Transverse colon (tissue), 4 donors: ENCODE measurements at regions of chr18 and their contacts with region 1.

Region 1: GRCh38 chr18:62601841-62602240 is 79.0 kb downstream of the ZCCHC2 start:
- DNase-seq: no peak
- H3K4me3 ChIP-seq: no peak overlapping the region
- H3K27ac ChIP-seq: no peak overlapping the region
- H3K4me1 ChIP-seq: peaks cover 0 to 4% (median 2%) of the 10 kb centered on the region in 4 donors
- H3K27me3 ChIP-seq: peaks cover 33% of the 10 kb centered on the region
- CTCF ChIP-seq: no peak
- EP300 ChIP-seq: no peak
- POLR2A ChIP-seq: no peak

Region 2: GRCh38 chr18:62505669-62506494 is 96.0 kb before region 1 on chr18:
- in situ Hi-C with region 1: no loop called
- intact Hi-C with region 1: no loop called
- DNase-seq: no peak
- H3K4me3 ChIP-seq: peak overlapping the region; percentile 8 to 48 (median 24)
- H3K27ac ChIP-seq: peak overlapping the region; percentile 16 to 74 (median 64)
- H3K4me1 ChIP-seq: peaks cover 4 to 18% (median 6%) of the 10 kb centered on the region in 4 donors
- H3K27me3 ChIP-seq: no peaks in the 10 kb centered on the region
- CTCF ChIP-seq: no peak
- EP300 ChIP-seq: no peak
- POLR2A ChIP-seq: no peak

Region 3: GRCh38 chr18:63969960-63970802 is 1368.3 kb after region 1 on chr18 and contains the start of gene SERPINB8:
- in situ Hi-C with region 1: no loop called
- intact Hi-C with region 1: loop called (anchors 5 kb)
- DNase-seq: peak; percentile 94
- H3K4me3 ChIP-seq: peak within 1 kb of the TSS; percentile 72 to 91 (median 75)
- H3K27ac ChIP-seq: peak within 1 kb of the TSS; percentile 97 to 100 (median 98)
- H3K4me1 ChIP-seq: peaks cover 0 to 22% (median 14%) of the 10 kb centered on the region in 4 donors
- H3K27me3 ChIP-seq: no peaks in the 10 kb centered on the region
- CTCF ChIP-seq: no peak
- EP300 ChIP-seq: no peak
- POLR2A ChIP-seq: peak; percentile 96
- total RNA-seq, gene SERPINB8: 3.0 to 15.7 (median 13.5) TPM